Activated CD4-positive, alpha-beta T cell treated with anti-CD3 and anti-CD28 coated beads, Interleukin-2, amount 10 ng/mL, durations not matched to agents 24 days and 14 days (primary cell): ENCODE measurements at regions of chrX and their contacts with region 1.

Region 1: DNA sequence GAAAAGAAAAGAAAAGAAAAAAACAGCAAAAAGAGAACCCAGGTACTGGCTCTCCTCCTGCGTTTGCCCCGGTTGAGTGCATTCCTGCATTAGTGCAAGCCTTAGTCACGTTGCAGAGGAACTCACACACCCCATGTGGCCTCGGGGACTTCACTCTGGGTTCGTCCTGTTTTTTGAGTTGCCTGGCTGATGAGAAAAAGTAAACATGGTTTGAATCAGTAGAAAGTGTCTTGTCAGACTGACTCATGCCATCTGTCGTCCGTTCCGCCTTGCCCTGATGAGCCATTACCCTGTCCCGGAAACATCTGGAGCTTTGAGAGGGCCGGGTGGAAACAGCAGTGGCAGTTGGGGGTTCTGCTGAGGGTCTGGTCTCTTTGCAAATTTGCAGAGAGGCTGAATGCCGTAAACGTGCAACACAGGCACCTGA is 16.3 kb downstream of the CD99 start:
- DNase-seq: peak; percentile 87
- H3K4me3 Mint-ChIP-seq: peak overlapping the region; percentile 66
- H3K27ac Mint-ChIP-seq: peak overlapping the region; percentile 98
- H3K4me1 Mint-ChIP-seq: peaks cover 84% of the 10 kb centered on the region
- H3K27me3 Mint-ChIP-seq: no peaks in the 10 kb centered on the region

Region 2: DNA sequence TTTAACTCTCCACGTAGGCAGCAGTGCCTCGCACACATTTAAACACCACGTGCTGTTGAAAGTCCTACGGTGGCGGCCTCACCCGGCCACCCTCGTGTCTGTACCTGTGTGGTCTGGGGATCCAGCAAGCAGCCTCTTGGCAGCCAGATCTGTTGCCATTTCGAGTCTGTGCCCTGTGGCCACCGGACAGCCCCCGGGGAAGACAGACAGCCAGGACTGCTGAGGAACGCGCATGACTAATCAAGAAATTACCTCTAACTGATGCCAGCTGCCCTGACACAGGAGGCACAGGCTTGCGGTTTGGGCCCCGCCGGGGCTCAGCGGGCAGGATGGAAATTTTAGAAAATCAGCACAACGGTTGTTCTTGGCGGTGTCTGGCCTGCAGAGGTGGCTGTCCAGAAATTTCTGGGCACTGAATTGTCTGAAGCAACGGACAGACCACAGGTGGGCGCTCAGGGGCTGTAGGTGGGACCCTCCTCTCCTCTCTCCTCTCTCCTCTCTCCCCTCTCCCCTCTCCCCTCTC is 1239.0 kb before region 1 on chrX:
- intact Hi-C with region 1: loop called (anchors 5 kb)
- DNase-seq: peak; percentile 90
- H3K4me3 Mint-ChIP-seq: peak overlapping the region; percentile 83
- H3K27ac Mint-ChIP-seq: peak overlapping the region; percentile 92
- H3K4me1 Mint-ChIP-seq: peaks cover 70% of the 10 kb centered on the region
- H3K27me3 Mint-ChIP-seq: no peaks in the 10 kb centered on the region

Region 3: DNA sequence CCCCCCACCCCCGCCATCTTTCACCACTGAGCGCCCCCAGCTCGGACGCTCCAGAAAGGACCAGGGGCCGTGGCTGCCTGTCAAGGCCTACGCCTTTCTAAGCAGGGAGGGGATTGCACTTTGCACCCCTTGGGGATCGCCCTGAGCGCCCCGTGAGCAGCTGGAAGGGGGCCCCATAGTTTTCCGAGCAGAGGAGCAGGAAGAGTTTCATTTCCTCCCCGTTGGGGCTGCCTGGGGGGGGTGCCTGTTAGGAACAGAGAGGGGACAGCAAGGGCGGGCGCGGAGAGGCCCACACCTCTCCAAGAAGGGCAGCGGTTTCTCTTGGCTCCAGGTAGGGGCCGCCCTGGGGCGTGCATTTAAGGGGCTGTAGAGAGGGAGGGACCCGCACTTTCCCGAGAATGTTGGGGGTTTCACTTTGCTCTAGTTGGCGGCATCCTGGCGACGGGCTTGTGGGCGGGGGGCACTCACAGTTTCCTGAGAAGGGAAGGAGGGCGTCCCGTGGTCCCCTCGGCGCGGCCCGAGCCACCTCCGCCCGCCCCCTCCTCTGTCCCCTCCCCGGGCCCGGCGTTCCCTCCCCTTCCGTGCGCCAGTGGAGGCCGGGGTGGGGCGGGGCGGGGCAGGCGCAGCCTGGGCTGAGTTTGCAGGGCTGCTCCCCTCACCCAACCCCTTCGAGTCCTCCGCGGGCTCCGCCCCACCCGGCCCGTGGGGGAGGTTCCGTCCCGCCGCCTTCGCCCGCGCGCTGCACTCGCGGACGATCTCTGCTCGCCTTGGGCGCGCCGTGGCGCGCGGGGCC is 98.5 kb before region 1 on chrX:
- intact Hi-C with region 1: loop called (anchors 1 kb)
- DNase-seq: peak; percentile 97
- H3K4me3 Mint-ChIP-seq: peak overlapping the region; percentile 95
- H3K27ac Mint-ChIP-seq: peak overlapping the region; percentile 93
- H3K4me1 Mint-ChIP-seq: peaks cover 46% of the 10 kb centered on the region
- H3K27me3 Mint-ChIP-seq: no peaks in the 10 kb centered on the region

Region 4: GRCh38 chrX:2647627-2648026 is 59.7 kb before region 1 on chrX:
- intact Hi-C with region 1: loop called (anchors 2 kb)
- DNase-seq: no peak
- H3K4me3 Mint-ChIP-seq: peak overlapping the region; percentile 18
- H3K27ac Mint-ChIP-seq: peak overlapping the region; percentile 83
- H3K4me1 Mint-ChIP-seq: peaks cover 25% of the 10 kb centered on the region
- H3K27me3 Mint-ChIP-seq: no peaks in the 10 kb centered on the region

Region 5: GRCh38 chrX:2690856-2691542 is 16.3 kb before region 1 on chrX and contains the start of gene CD99:
- intact Hi-C with region 1: loop called (anchors 1 kb)
- DNase-seq: peak; percentile 98
- H3K4me3 Mint-ChIP-seq: peak within 1 kb of the TSS; percentile 95
- H3K27ac Mint-ChIP-seq: peak within 1 kb of the TSS; percentile 98
- H3K4me1 Mint-ChIP-seq: peaks cover 32% of the 10 kb centered on the region
- H3K27me3 Mint-ChIP-seq: peaks cover 3% of the 10 kb centered on the region
- total RNA-seq, gene CD99: 361 and 371 TPM in 2 replicates

Region 6: DNA sequence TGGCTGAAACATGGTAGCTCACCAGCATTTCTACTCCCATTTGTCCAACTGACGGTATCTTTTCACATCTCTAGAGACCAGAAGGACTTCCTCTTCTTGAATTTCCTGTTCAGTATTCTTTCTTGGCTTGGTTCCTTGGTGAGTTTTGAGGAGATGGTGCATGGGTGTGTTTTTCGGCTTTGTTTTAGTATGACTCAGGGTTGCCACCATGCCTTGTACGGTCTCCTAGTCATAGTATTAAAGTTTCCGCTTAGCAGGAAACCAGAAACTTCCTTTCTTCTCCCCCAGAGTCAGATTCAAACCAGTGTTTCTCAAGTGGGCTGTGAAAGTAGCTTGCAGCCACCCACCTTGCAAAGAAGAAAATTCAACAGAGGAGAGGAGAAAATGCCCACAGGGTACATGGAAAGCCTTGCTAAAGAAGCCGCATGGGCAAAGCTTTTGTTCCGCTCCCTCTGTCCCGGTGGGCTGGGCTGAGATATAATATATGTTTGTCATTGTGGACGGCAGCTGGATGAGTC is 10.6 kb before region 1 on chrX:
- intact Hi-C with region 1: loop called (anchors 1 kb)
- DNase-seq: peak; percentile 89
- H3K4me3 Mint-ChIP-seq: peak overlapping the region; percentile 95
- H3K27ac Mint-ChIP-seq: peak overlapping the region; percentile 98
- H3K4me1 Mint-ChIP-seq: peaks cover 84% of the 10 kb centered on the region
- H3K27me3 Mint-ChIP-seq: no peaks in the 10 kb centered on the region

Region 7: DNA sequence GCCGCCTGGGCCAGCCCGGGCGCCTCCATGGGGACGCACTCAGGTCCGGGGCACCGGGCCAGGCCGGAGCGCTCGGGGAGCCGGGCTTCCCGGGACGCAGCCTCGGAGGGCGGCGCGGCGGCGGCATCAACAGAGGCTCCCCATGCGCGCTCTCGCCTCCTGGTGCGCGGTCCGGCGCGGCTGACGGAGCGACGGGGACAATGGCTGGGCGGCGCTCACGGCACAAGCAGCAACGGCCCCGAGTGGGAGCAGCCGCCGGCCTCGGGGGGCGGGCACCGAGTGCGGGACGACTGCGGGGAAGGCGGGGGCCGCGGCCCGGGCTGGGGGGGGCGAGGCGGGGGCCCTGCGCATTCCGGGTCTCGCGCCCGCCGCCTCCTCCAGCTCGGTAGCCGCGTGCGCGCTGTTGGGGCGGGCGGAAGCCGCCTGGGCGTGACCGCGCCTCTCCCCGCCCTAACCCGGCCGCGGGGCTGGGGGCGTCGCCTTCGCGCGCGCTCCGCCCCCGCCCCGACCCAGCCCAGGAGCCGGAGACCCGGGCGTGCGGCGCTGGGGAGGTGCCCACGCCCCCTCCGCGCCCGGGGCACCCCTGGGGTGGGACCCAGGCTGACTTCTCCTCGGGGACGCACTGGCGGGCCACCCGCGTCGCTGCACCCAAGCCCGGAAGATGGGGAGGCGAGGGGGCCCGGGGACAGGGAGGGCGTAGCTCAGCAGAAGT is 1006.0 kb after region 1 on chrX and contains the start of gene PRKX:
- intact Hi-C with region 1: loop called (anchors 5 kb)
- DNase-seq: peak; percentile 93
- H3K4me3 Mint-ChIP-seq: peak within 1 kb of the TSS; percentile 97
- H3K27ac Mint-ChIP-seq: peak within 1 kb of the TSS; percentile 94
- H3K4me1 Mint-ChIP-seq: peaks cover 8% of the 10 kb centered on the region
- H3K27me3 Mint-ChIP-seq: no peaks in the 10 kb centered on the region
- total RNA-seq, gene PRKX: 61.3 and 62.3 TPM in 2 replicates